Caco-2 (cell line): ENCODE measurements at regions of chr1 and their contacts with region 1.

Region 1: DNA sequence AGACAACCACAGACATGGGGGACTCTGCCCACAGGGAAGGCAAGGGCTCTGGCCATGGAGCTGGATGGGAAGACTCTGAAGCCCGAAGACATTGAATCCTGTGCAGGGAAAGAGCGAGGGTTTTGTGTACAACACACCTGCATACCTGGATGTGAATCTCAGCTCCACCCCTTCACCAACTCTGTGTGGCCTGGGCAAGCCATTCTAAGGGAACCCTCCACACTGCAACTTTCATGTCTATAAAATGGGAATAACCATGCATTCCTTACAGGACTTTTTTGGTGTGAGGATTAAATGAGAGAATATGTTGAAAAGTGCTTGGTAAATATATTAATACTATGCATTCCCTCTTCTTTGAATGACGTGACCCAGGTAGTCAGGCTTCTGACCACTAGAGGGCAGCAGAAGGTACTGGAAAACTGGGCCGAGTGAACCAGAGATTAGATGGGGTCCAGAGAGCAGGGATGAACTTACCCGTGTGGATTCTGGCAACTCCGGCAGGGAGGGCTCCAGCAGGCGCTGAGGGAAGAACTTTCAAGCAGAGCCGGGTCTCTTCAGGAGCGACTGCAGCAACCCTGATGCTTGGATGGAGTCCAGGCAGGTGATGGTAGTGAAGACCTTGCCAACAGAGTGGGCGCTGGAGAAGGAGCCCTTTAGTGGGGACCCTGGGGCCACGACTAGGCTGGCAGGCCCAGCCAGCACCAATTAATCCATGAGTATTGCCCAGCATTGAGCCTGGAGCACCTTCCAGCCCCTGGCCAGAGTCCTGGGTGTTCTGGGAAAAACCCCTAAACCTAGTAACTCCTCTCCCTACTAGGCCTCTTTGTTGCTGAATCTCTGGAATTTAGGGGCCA is 834 bp upstream of the ELF3 start:
- DNase-seq: peak; percentile 89 to 91
- H3K4me3 ChIP-seq: peak overlapping the region; percentile 19
- H3K4me3 Mint-ChIP-seq: peak overlapping the region; percentile 72
- H3K27ac Mint-ChIP-seq: peak overlapping the region; percentile 58
- H3K4me1 ChIP-seq: peaks cover 56% of the 10 kb centered on the region
- H3K4me1 Mint-ChIP-seq: peaks cover 30% of the 10 kb centered on the region
- H3K27me3 ChIP-seq: no peaks in the 10 kb centered on the region
- H3K27me3 Mint-ChIP-seq: no peaks in the 10 kb centered on the region
- CTCF ChIP-seq: peak; percentile 88 to 93

Region 2: DNA sequence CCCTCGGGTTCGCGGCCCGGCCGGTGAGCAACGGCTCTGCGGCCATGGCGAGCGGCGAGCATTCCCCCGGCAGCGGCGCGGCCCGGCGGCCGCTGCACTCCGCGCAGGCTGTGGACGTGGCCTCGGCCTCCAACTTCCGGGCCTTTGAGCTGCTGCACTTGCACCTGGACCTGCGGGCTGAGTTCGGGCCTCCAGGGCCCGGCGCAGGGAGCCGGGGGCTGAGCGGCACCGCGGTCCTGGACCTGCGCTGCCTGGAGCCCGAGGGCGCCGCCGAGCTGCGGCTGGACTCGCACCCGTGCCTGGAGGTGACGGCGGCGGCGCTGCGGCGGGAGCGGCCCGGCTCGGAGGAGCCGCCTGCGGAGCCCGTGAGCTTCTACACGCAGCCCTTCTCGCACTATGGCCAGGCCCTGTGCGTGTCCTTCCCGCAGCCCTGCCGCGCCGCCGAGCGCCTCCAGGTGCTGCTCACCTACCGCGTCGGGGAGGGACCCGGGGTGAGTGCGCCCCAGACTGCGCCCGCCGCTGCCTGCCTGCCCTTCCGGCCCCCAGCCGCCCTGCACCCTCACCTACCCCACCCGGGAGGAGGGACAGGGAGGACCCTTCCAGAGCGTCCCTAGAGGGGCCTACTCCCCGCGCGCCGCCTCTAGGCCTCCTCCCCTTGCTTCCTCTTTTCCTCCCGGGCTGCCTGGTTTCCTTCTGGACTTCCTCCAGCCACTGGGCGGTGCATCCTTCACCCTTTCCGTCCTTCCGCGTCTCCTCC is 26.8 kb before region 1 on chr1 and contains the start of gene RNPEP:
- CTCF ChIA-PET with region 1: interaction called, 10 read pairs
- POLR2A ChIA-PET with region 1: interaction called, 13 read pairs
- intact Hi-C with region 1: loop called (anchors 1 kb)
- DNase-seq: peak in 1 of 2 experiments; percentile 75
- H3K4me3 ChIP-seq: peak within 1 kb of the TSS; percentile 68
- H3K4me3 Mint-ChIP-seq: peak within 1 kb of the TSS; percentile 99
- H3K27ac Mint-ChIP-seq: peak within 1 kb of the TSS; percentile 94
- H3K4me1 ChIP-seq: peaks cover 17% of the 10 kb centered on the region
- H3K4me1 Mint-ChIP-seq: peaks cover 27% of the 10 kb centered on the region
- H3K27me3 ChIP-seq: no peaks in the 10 kb centered on the region
- H3K27me3 Mint-ChIP-seq: no peaks in the 10 kb centered on the region
- CTCF ChIP-seq: peak; percentile 14 to 24
- total RNA-seq, gene RNPEP: 75.9 and 83.0 TPM in 2 replicates

Region 3: DNA sequence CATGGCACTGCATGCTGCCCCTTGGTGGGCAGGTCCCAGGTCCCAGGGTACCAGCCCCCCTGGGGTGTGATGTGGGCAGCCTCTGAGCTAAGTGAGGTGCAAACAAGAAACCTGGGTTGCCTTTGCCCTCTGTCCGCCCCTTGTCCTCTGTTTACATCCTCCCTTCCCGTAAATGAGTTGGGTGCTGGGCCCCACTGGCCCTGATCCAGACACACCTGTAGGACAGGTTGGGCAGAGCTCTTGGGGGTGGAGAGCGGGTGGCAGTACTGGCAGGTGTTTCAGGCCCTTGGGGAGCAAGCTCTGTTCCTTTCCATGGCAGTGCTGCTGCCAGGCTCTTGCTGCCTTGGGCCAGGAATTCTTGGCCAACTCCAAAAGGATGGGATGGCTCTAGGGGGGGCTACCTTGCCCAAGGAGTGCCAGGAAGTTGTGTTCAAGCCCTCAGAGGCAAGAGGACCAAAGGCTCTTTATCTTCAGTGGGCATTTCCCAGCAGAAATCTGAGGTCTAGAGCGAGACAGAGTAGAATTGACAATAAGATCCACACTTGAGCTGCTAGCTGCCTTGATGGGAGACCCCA is 36.8 kb after region 1 on chr1:
- CTCF ChIA-PET with region 1: interaction called, 3 read pairs
- POLR2A ChIA-PET with region 1: interaction called, 12 read pairs
- intact Hi-C with region 1: loop called (anchors 5 kb)
- DNase-seq: peak; percentile 63 to 71
- H3K4me3 ChIP-seq: no peak overlapping the region
- H3K4me3 Mint-ChIP-seq: no peak overlapping the region
- H3K27ac Mint-ChIP-seq: peak overlapping the region; percentile 48
- H3K4me1 ChIP-seq: peaks cover 63% of the 10 kb centered on the region
- H3K4me1 Mint-ChIP-seq: peaks cover 49% of the 10 kb centered on the region
- H3K27me3 ChIP-seq: no peaks in the 10 kb centered on the region
- H3K27me3 Mint-ChIP-seq: no peaks in the 10 kb centered on the region
- CTCF ChIP-seq: no peak

Region 4: DNA sequence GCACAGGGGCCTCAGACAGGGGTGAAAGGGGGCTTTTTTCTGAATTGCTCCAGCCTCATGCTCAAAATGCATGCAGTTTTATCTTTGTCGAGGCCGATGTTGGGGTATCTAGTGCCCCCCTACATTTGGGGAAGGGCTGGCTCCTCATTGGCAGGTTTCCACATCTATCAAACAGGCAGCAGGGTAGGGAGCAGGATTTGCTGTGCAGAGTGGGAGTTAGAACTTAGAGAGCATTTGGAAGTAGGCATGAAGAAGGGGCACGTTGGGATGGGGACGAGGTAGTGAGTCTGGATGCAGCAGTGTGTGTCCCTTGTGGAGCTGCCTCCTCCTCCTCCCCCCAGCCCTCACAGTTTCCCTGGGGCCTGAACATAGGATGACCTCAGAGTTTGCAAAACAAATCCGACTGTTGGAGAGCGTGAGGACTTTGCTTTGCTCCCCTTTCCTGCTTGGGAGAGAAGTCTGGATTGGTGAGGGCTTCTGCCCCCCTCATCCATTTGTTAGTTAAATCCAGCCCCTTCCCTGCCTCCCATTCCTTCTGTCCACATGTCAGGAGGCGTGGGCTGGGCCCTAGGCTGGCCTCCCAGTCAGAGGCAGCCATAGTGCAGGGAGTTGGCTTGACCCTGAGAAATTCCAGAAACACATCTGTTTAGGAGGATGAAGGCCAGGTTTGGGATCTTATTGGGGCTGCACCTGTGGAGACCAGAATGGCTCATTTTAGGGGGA is 76.3 kb after region 1 on chr1:
- CTCF ChIA-PET with region 1: interaction called, 5 read pairs
- POLR2A ChIA-PET with region 1: interaction called, 12 read pairs
- intact Hi-C with region 1: loop called (anchors 1 kb)
- DNase-seq: peak; percentile 59 to 82
- H3K4me3 ChIP-seq: no peak overlapping the region
- H3K4me3 Mint-ChIP-seq: peak overlapping the region; percentile 7
- H3K27ac Mint-ChIP-seq: peak overlapping the region; percentile 88
- H3K4me1 ChIP-seq: peaks cover 60% of the 10 kb centered on the region
- H3K4me1 Mint-ChIP-seq: peaks cover 40% of the 10 kb centered on the region
- H3K27me3 ChIP-seq: no peaks in the 10 kb centered on the region
- H3K27me3 Mint-ChIP-seq: no peaks in the 10 kb centered on the region
- CTCF ChIP-seq: no peak

Region 5: DNA sequence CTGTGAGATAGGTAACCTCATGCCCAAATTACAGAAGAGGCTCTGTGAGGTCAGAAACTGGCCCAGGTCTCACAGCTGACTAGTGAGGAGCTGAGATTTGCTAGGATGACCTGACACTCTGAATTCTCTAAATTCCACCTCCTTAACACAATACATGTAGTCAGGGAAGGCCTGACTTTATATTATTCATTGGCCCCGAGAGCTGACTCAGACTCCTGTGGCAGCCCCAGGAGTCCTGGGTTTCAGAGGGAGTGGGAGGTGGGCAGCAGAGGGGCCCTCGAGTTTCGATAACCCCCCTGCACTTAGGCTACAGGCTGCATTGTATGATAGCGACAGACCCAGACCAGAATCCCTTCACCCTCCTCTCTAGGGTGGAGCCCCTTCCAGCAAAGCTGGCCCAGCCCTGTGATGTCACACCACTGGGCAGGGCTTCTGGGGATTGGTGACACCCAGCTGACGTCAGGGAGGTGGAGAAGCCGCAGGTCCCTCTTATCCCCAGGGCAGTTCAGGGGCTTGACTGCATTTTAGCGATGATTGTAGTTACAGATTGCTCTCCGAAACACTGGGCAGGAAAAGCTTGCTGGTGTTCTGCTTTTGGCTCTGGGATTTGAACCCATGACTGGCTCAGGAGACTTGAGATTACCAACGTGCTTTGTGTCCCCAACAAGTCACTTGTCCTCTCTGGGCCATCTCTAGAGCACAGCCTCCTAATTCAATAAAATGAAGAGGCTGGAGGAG is 96.2 kb after region 1 on chr1:
- CTCF ChIA-PET with region 1: interaction called, 6 read pairs
- POLR2A ChIA-PET with region 1: interaction called, 50 read pairs
- intact Hi-C with region 1: loop called (anchors 1 kb)
- DNase-seq: peak; percentile 89 to 92
- H3K4me3 ChIP-seq: no peak overlapping the region
- H3K4me3 Mint-ChIP-seq: peak overlapping the region; percentile 53
- H3K27ac Mint-ChIP-seq: peak overlapping the region; percentile 89
- H3K4me1 ChIP-seq: peaks cover 45% of the 10 kb centered on the region
- H3K4me1 Mint-ChIP-seq: peaks cover 42% of the 10 kb centered on the region
- H3K27me3 ChIP-seq: no peaks in the 10 kb centered on the region
- H3K27me3 Mint-ChIP-seq: no peaks in the 10 kb centered on the region
- CTCF ChIP-seq: no peak

Region 6: DNA sequence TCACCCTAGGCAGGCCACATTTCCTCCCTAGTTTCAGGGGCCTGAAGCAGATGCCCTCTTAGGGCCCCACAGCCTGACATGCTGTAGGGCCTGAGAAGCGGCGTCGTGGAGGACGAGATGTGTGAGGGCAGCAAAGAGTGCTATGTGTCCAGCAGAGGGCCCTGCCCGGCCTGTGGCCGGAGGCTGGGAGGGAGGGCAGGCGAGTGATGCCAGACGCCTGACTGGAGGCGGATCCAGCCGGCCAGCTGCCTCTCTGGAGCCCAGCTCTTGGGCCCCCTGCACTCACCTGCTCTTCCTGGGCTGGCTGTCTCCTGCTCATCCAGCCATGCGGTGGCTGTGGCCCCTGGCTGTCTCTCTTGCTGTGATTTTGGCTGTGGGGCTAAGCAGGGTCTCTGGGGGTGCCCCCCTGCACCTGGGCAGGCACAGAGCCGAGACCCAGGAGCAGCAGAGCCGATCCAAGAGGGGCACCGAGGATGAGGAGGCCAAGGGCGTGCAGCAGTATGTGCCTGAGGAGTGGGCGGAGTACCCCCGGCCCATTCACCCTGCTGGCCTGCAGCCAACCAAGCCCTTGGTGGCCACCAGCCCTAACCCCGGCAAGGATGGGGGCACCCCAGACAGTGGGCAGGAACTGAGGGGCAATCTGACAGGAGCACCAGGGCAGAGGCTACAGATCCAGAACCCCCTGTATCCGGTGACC is 113.2 kb after region 1 on chr1 and contains the start of gene GPR37L1:
- CTCF ChIA-PET with region 1: interaction called, 15 read pairs
- POLR2A ChIA-PET with region 1: interaction called, 9 read pairs
- intact Hi-C with region 1: loop called (anchors 1 kb)
- DNase-seq: peak; percentile 71
- H3K4me3 ChIP-seq: no peak within 1 kb of the TSS
- H3K4me3 Mint-ChIP-seq: no peak within 1 kb of the TSS
- H3K27ac Mint-ChIP-seq: no peak within 1 kb of the TSS
- H3K4me1 ChIP-seq: peaks cover 16% of the 10 kb centered on the region
- H3K4me1 Mint-ChIP-seq: no peaks in the 10 kb centered on the region
- H3K27me3 ChIP-seq: no peaks in the 10 kb centered on the region
- H3K27me3 Mint-ChIP-seq: no peaks in the 10 kb centered on the region
- CTCF ChIP-seq: peak; percentile 56 to 75
- total RNA-seq, gene GPR37L1: 0.07 TPM in 2 replicates